A549 (cell line): ENCODE measurements at regions of chr17 and their contacts with region 1.

Region 1: DNA sequence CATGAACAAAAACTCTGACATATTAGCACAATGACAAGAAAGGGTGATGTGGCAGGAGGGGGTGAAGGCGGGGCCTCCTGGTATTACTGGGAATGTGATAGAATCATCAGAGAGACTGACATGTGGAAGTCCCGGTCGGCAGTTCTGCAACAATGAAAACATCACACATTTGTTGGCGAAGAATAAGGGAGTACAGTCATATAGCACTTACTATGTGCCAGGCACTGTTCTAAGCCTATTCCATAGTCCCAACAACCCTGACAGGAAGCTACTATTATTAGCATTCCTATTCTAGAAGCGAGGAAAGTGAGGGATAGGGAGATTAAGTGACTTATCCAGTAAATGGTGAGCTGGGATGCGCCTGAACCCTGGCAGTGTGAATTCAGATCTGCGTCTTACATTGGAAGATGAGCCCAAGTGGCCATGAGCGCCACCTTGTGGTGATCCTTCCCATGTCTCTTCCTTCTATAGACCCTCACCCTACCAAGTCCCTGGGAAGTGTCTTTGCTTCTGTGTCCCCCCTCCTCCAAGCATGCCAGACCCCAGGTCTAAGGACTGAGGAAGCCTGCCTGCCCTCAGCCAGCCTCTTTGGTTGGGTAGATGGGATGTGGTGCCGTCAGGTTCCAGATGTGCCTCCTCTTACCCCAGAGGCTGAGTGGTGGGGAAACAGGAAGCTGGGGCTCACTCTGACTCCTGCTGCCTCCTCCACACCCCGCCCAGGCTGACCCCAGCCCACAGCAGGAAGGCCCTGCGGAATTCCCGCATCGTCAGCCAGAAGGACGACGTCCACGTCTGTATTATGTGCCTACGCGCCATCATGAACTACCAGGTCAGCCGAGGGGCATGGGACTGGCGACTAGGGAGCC is 14.0 kb downstream of the FMNL1 start:
- DNase-seq: peak; percentile 87 to 93
- ATAC-seq: peak; percentile 60 to 75
- H3K4me3 ChIP-seq: no peak overlapping the region
- H3K27ac ChIP-seq: peak overlapping the region; percentile 35 to 66; a peak in 5 of 6 replicates
- H3K4me1 ChIP-seq: peaks cover 33% of the 10 kb centered on the region
- CTCF ChIP-seq: peak; percentile 95
- EP300 ChIP-seq: no peak
- POLR2A ChIP-seq: no peak
- RAD21 ChIP-seq: peak; percentile 79 to 82

Region 2: DNA sequence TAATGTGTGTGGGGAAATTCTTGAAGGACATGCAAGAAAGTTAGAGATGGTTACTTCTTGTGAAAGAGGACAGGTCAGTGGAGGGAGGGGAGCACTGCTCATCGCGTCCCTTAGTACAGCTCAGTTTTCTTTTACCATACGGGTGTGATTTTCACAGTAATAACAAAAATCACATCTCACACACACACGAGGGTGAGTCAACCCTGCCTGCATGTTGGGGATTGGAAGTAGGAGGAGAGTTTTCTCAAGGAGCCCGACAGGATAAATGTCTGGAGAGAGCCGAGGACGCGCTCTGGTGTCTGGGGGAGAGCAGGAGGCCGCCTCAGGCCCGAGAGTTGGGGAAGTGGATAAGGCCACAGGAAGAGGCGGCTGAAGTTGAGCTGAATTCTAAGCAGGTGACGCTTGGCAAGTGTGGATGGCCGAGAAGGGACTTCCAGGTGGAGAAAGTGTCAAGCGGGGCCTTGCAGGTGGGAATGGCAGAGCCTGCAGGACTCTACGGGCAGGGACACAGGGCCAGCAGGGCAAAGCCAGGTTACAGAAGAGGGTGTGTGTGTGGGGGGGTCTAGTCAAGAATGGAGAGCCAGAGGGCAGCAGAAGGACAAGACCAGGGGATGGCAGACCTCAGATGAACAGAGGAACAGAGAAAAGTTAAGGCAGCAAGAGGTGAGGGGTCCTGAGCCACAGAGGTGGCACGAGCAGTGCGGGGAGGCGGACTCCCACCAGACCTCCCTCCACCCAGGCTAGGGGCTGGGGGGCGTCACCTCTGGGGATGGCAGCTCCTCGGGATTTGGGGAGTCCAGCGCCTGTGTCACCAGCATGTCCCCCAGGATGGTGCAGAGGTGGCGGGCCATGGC is 119.6 kb before region 1 on chr17:
- CTCF ChIA-PET with region 1: no interaction called
- POLR2A ChIA-PET with region 1: no interaction called
- DNase-seq: no peak
- ATAC-seq: no peak
- H3K4me3 ChIP-seq: no peak overlapping the region
- H3K27ac ChIP-seq: peak overlapping the region in 1 of 2 experiments; percentile 37; a peak in 2 of 6 replicates
- H3K4me1 ChIP-seq: 0 out of 3 replicates have a peak, but pooled peaks cover 3% of the 10 kb centered on the region
- CTCF ChIP-seq: no peak
- EP300 ChIP-seq: no peak
- POLR2A ChIP-seq: no peak
- RAD21 ChIP-seq: no peak

Region 3: GRCh38 chr17:45270828-45271418 is 35.3 kb after region 1 on chr17:
- CTCF ChIA-PET with region 1: interaction called, 55 read pairs
- POLR2A ChIA-PET with region 1: no interaction called
- DNase-seq: peak in 1 of 2 experiments; percentile 68
- ATAC-seq: peak; percentile 36 to 72; a peak in 4 of 6 replicates
- H3K4me3 ChIP-seq: no peak overlapping the region
- H3K27ac ChIP-seq: no peak overlapping the region
- H3K4me1 ChIP-seq: peaks cover 21% of the 10 kb centered on the region
- CTCF ChIP-seq: peak; percentile 68
- EP300 ChIP-seq: no peak
- POLR2A ChIP-seq: no peak
- RAD21 ChIP-seq: peak; percentile 45 to 46; a peak in 4 of 5 replicates

Region 4: DNA sequence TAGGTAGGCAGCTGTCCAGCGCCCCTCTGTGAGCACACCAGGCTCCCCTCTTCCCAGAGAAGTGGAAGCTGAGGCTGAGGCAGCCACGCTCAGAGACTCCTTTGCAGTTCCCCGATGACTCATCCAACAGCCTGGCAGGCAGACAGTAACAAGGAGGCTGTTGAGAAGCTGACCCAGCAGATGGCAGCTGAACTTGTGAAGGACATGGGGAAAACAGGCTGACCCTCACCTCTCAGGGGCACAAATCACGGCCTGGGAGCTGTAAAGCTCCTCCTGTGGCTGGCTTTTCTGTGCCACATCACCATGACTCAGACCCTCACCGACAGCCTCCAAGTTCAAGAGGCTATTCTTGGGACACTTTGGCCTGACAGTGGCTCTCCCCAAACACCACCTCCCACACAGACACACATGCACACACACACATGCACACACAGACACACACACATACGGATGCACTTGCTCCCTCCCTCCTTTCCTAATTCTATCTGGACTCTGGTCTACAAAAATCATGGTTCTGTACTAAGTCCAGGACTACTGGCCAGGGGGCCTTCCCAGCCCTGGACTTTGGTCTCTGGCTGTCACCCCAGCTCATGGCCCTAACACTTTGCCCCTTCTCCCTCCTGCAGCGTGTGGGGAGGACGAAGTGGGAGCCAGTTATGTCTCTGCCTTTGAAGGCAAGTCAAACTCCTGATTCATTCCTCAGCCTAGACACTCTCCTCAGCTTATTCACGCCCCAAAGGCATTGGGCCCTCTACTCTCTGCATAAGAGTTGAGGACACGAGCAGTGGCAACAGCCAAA is 58.0 kb after region 1 on chr17:
- CTCF ChIA-PET with region 1: interaction called, 14 read pairs
- POLR2A ChIA-PET with region 1: no interaction called
- DNase-seq: peak; percentile 93 to 97
- ATAC-seq: peak; percentile 84 to 86
- H3K4me3 ChIP-seq: peak overlapping the region; percentile 8; the same call in 1 of the 3 replicates
- H3K27ac ChIP-seq: peak overlapping the region; percentile 90 to 92
- H3K4me1 ChIP-seq: peaks cover 90% of the 10 kb centered on the region
- CTCF ChIP-seq: peak; percentile 34
- EP300 ChIP-seq: peak; percentile 55 to 57; a peak in 2 of 5 replicates
- POLR2A ChIP-seq: no peak
- RAD21 ChIP-seq: peak; percentile 57 to 60

Region 5: GRCh38 chr17:45307290-45308015 is 71.8 kb after region 1 on chr17:
- CTCF ChIA-PET with region 1: interaction called, 13 read pairs
- POLR2A ChIA-PET with region 1: no interaction called
- DNase-seq: peak in 1 of 2 experiments; percentile 69
- ATAC-seq: peak; percentile 16 to 28; a peak in 5 of 6 replicates
- H3K4me3 ChIP-seq: peak overlapping the region; percentile 10; the same call in 1 of the 3 replicates
- H3K27ac ChIP-seq: peak overlapping the region; percentile 77 to 92
- H3K4me1 ChIP-seq: peaks cover 92% of the 10 kb centered on the region
- CTCF ChIP-seq: no peak
- EP300 ChIP-seq: no peak
- POLR2A ChIP-seq: no peak
- RAD21 ChIP-seq: no peak

Region 6: DNA sequence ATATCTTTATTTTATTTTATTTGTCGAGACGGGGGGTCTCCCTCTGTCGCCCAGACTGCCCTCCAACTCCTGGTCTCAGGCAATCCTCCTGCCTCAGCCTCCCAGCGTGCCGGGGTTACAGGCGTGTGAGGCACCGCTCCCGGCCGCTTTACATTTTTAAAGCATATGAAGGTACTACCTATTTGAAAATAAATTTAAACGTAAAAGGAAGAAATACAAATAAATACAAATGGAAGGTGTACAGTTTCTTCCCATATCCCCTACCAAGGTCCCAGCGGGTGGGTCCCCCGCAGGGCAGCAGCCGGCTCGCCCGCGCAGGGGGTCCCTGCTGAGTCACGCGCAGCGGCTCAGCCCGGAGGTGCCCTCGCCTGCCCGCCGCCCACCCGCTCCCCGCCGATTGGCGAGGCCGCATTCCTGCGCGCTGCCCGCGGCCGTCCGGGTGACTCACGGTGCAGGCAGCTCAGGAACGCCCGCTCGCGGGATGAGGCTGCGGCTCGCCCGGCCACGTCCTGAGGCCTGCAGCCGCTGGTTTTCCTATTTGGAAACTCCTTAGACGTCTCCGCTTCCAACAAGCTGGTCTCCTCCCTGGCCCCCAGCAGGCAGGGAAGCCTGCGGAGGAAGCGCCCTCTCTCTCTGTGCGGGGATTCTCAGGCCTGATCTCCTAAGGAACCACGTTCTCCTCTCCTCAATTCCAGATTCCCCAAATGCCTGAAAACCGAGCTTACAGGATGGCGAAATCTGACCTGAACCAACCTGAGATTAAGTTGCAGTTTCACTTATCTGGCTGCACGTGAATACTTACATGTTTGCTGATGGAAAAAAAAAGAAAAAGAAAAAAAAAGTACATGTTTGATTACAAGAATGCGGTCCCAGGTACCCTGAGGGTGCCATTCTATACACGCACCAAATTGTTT is 136.0 kb after region 1 on chr17:
- CTCF ChIA-PET with region 1: interaction called, 24 read pairs
- POLR2A ChIA-PET with region 1: no interaction called
- DNase-seq: peak; percentile 98
- ATAC-seq: peak; percentile 93 to 95
- H3K4me3 ChIP-seq: no peak overlapping the region; the same call in 2 of the 3 replicates
- H3K27ac ChIP-seq: peak overlapping the region; percentile 95 to 97
- H3K4me1 ChIP-seq: peaks cover 84% of the 10 kb centered on the region
- CTCF ChIP-seq: no peak; the same call in 1 of the 3 replicates
- EP300 ChIP-seq: peak; percentile 97 to 99
- POLR2A ChIP-seq: no peak; the same call in 1 of the 2 replicates
- RAD21 ChIP-seq: peak; percentile 44 to 71; a peak in 4 of 5 replicates

Region 7: GRCh38 chr17:45394913-45395568 is 159.4 kb after region 1 on chr17:
- CTCF ChIA-PET with region 1: interaction called, 27 read pairs
- POLR2A ChIA-PET with region 1: no interaction called
- DNase-seq: peak; percentile 88 to 95
- ATAC-seq: peak; percentile 68 to 83
- H3K4me3 ChIP-seq: no peak overlapping the region
- H3K27ac ChIP-seq: peak overlapping the region; percentile 23 to 73; a peak in 3 of 6 replicates
- H3K4me1 ChIP-seq: 0 out of 3 replicates have a peak, but pooled peaks cover 3% of the 10 kb centered on the region
- CTCF ChIP-seq: peak; percentile 97
- EP300 ChIP-seq: no peak
- POLR2A ChIP-seq: no peak
- RAD21 ChIP-seq: peak; percentile 89 to 90